Motor neuron (in vitro differentiated cells): ENCODE measurements at regions of chr22 and their contacts with region 1.

Region 1: GRCh38 chr22:19085233-19085718 is 36.9 kb downstream of the DGCR2 start:
- ATAC-seq: peak in 4 of 8 experiments; percentile 47 to 80 (median 74)
- H3K4me3 ChIP-seq: no peak overlapping the region
- H3K27ac ChIP-seq: peak overlapping the region in 1 of 2 donors; percentile 21
- H3K4me1 ChIP-seq: no peaks in the 10 kb centered on the region

Region 2: DNA sequence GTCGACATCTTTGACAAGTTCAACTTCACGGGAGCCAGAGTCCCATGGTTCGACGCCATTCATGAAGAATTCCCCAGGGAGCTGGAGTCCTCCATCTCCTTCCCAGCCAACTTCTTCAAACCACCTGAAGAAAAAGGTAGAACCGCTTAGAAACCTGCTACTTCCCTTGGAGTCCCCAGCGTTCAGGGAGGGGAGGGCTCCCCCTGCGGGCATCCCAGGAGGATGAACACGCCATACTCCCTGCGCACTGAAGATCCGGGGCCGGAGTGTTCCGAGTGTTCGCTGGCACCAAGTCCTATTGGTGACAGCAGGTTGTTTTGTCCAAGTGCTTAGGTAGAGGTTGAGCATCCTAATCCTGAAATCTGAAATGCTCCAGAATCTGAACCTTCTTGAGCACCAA is 97.5 kb before region 1 on chr22:
- in situ Hi-C with region 1: loop called in 1 of 9 experiments (anchors 25 kb)
- ATAC-seq: peak in 2 of 8 experiments; percentile 18 to 46
- H3K4me3 ChIP-seq: no peak overlapping the region
- H3K27ac ChIP-seq: no peak overlapping the region
- H3K4me1 ChIP-seq: no peaks in the 10 kb centered on the region

Region 3: DNA sequence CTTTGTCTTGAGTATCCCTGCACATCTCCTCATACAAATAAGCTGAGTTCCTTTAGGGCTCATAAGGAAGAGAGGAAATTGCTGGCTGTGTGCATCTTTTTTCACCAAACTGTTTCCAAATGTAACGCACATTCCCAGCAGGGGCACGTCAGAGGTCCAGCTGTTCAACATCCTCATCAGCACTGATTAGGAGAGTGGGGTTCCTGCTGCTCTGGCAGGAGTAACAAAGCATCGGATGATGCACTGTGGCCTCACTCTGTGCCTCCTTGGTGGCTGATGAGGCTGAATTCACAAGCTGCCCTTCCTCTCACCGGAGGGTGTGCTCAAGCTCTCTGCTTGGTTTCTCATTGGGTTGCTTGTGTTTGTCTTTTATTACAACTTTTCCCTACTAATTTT is 128.8 kb after region 1 on chr22:
- in situ Hi-C with region 1: no loop called
- ATAC-seq: peak in 2 of 8 experiments; percentile 43 to 48
- H3K4me3 ChIP-seq: no peak overlapping the region
- H3K27ac ChIP-seq: no peak overlapping the region
- H3K4me1 ChIP-seq: peaks cover 4 to 10% of the 10 kb centered on the region in 2 donors

Region 4: GRCh38 chr22:19361501-19362103 is 276.3 kb after region 1 on chr22:
- in situ Hi-C with region 1: loop called in 1 of 9 experiments (anchors 25 kb)
- ATAC-seq: peak in 1 of 8 experiments; percentile 46
- H3K4me3 ChIP-seq: no peak overlapping the region
- H3K27ac ChIP-seq: peak overlapping the region in 1 of 2 donors; percentile 23
- H3K4me1 ChIP-seq: peaks cover 0 to 9% of the 10 kb centered on the region in 2 donors